HepG2 (cell line): ENCODE measurements at regions of chr17 and their contacts with region 1.

Region 1: DNA sequence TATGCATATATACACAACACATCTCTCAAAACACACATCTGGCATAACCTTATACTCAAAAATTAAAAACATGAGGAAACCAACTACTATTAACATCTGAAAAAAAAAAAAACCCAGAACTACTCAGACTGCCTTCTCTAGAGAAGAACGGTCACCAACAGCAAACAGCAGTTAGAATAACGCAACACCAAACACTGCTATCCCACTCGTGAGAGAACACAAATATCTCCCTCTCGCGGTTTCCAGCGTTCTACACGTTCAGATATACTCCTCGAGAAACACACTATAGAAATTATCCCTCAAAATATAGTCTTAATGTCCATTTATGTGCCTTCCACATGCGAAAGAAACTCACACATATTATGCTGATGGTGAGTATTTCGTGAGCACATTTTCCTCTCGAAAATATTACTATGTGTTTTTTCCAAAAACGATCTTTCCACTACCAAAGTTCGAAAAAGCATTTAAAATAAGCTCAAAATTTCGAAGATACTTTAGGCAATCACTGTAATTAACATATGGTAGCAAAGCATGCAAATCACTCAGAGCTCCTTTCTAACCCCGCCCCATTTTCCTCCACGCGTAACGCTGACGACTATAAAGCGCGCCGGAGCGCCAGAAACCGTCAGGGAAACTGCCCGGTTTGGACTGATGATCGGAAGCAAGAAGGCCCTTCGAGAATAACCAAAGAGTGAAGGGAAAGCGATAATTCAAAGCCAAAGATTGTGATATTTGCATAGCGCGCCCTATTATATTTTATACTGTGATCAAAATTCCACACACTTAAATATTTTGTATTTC is 60.1 kb downstream of the TEX14 start:
- DNase-seq: peak; percentile 99
- ATAC-seq: peak; percentile 98
- H3K4me3 ChIP-seq: peak overlapping the region; percentile 52 to 71 (median 71)
- H3K27ac ChIP-seq: peak overlapping the region; percentile 96
- H3K4me1 ChIP-seq: peaks cover 25% of the 10 kb centered on the region
- H3K27me3 ChIP-seq: no peaks in the 10 kb centered on the region
- CTCF ChIP-seq: peak; percentile 56
- EP300 ChIP-seq: peak; percentile 39 to 83; a peak in 3 of 4 replicates
- POLR2A ChIP-seq: peak; percentile 100
- RAD21 ChIP-seq: peak; percentile 82

Region 2: GRCh38 chr17:58427807-58428206 is 203.9 kb before region 1 on chr17:
- CTCF ChIA-PET with region 1: no interaction called
- POLR2A ChIA-PET with region 1: no interaction called
- in situ Hi-C with region 1: no loop called
- intact Hi-C with region 1: no loop called
- DNase-seq: no peak
- ATAC-seq: no peak
- H3K4me3 ChIP-seq: no peak overlapping the region
- H3K27ac ChIP-seq: no peak overlapping the region
- H3K4me1 ChIP-seq: 0 out of 2 replicates have a peak, but pooled peaks cover 5% of the 10 kb centered on the region
- H3K27me3 ChIP-seq: peaks cover 0 to 10% of the 10 kb centered on the region in 2 experiments; a peak in 2 of 5 replicates
- CTCF ChIP-seq: no peak
- EP300 ChIP-seq: no peak
- POLR2A ChIP-seq: no peak
- RAD21 ChIP-seq: no peak

Region 3: GRCh38 chr17:58577642-58578091 is 54.1 kb before region 1 on chr17:
- CTCF ChIA-PET with region 1: no interaction called
- POLR2A ChIA-PET with region 1: interaction called, 21 read pairs
- in situ Hi-C with region 1: no loop called
- intact Hi-C with region 1: no loop called
- DNase-seq: peak; percentile 52
- ATAC-seq: peak; percentile 35; the same call in 2 of the 3 replicates
- H3K4me3 ChIP-seq: no peak overlapping the region
- H3K27ac ChIP-seq: no peak overlapping the region
- H3K4me1 ChIP-seq: peaks cover 39% of the 10 kb centered on the region
- H3K27me3 ChIP-seq: no peaks in the 10 kb centered on the region
- CTCF ChIP-seq: peak; percentile 60
- EP300 ChIP-seq: 0 out of 4 replicates have a peak, but pooled peaks of 1 of the 2 experiments have one; percentile 21
- POLR2A ChIP-seq: no peak
- RAD21 ChIP-seq: no peak

Region 4: GRCh38 chr17:58615768-58616659 is 15.7 kb before region 1 on chr17:
- CTCF ChIA-PET with region 1: no interaction called
- POLR2A ChIA-PET with region 1: interaction called, 28 read pairs
- in situ Hi-C with region 1: no loop called
- intact Hi-C with region 1: no loop called
- DNase-seq: no peak
- ATAC-seq: no peak
- H3K4me3 ChIP-seq: no peak overlapping the region
- H3K27ac ChIP-seq: no peak overlapping the region
- H3K4me1 ChIP-seq: peaks cover 8% of the 10 kb centered on the region
- H3K27me3 ChIP-seq: peaks cover 3 to 30% of the 10 kb centered on the region in 2 experiments; a peak in 3 of 5 replicates
- CTCF ChIP-seq: no peak
- EP300 ChIP-seq: no peak
- POLR2A ChIP-seq: no peak
- RAD21 ChIP-seq: no peak

Region 5: GRCh38 chr17:58648236-58648806 is 16.6 kb after region 1 on chr17:
- CTCF ChIA-PET with region 1: no interaction called
- POLR2A ChIA-PET with region 1: interaction called, 16 read pairs
- in situ Hi-C with region 1: no loop called
- intact Hi-C with region 1: no loop called
- DNase-seq: no peak
- ATAC-seq: peak; percentile 31; the same call in 1 of the 3 replicates
- H3K4me3 ChIP-seq: no peak overlapping the region
- H3K27ac ChIP-seq: no peak overlapping the region
- H3K4me1 ChIP-seq: no peaks in the 10 kb centered on the region
- H3K27me3 ChIP-seq: peaks cover 0 to 3% of the 10 kb centered on the region in 2 experiments; a peak in 2 of 5 replicates
- CTCF ChIP-seq: no peak
- EP300 ChIP-seq: no peak
- POLR2A ChIP-seq: no peak
- RAD21 ChIP-seq: no peak

Region 6: GRCh38 chr17:58692239-58693055 is 60.7 kb after region 1 on chr17 and contains the start of gene RAD51C:
- CTCF ChIA-PET with region 1: no interaction called
- POLR2A ChIA-PET with region 1: interaction called, 49 read pairs
- in situ Hi-C with region 1: no loop called
- intact Hi-C with region 1: loop called (anchors 1 kb)
- DNase-seq: peak; percentile 84
- ATAC-seq: peak; percentile 99
- H3K4me3 ChIP-seq: peak within 1 kb of the TSS; percentile 63 to 85 (median 69)
- H3K27ac ChIP-seq: peak within 1 kb of the TSS; percentile 77
- H3K4me1 ChIP-seq: peaks cover 26% of the 10 kb centered on the region
- H3K27me3 ChIP-seq: peaks cover 0 to under 1% of the 10 kb centered on the region in 2 experiments; a peak in 1 of 5 replicates
- CTCF ChIP-seq: no peak; the same call in 1 of the 2 replicates
- EP300 ChIP-seq: no peak
- POLR2A ChIP-seq: peak; percentile 86 to 90; a peak in 3 of 4 replicates
- RAD21 ChIP-seq: peak; percentile 49
- total RNA-seq, gene RAD51C: 106 and 151 TPM in 2 replicates

Region 7: DNA sequence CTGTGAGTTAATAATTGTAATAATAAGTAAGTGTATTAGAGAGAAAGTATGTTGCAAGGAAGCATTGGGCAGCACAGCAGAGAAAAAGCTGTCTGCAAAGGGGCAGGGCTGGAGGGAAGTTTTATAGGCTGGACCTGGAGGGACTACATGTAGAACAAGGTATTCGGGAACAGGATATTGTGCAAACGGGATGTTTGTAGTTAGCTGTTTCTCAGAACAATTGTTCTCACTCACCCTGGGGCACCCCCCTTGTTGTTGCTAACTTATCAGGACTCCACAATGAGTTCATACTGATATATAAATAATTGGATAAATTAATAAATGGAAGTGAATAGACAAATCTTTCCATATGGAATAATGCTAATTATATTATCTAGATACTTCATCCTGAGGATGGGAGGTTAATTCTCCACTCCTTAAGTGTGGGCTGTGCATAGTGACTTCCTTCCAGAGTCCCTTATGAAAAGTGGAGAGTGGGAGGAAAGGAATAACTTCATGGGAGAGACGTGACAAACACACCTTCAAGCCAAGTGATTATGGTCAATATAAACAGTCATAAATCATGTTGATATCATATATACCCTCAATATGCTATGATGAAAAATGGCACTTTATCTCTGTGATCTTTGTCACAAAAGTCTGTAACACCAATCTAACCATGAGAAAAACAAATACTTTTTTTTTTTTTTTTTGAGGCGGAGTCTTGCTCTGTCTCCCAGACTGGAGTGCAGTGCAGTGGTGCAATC is 209.3 kb after region 1 on chr17:
- CTCF ChIA-PET with region 1: no interaction called
- POLR2A ChIA-PET with region 1: no interaction called
- in situ Hi-C with region 1: no loop called
- intact Hi-C with region 1: no loop called
- DNase-seq: peak; percentile 18
- ATAC-seq: no peak
- H3K4me3 ChIP-seq: no peak overlapping the region
- H3K27ac ChIP-seq: no peak overlapping the region
- H3K4me1 ChIP-seq: 0 out of 2 replicates have a peak, but pooled peaks cover 16% of the 10 kb centered on the region
- H3K27me3 ChIP-seq: no peaks in the 10 kb centered on the region; a peak in 1 of 5 replicates
- CTCF ChIP-seq: no peak
- EP300 ChIP-seq: no peak
- POLR2A ChIP-seq: no peak
- RAD21 ChIP-seq: no peak

Region 8: GRCh38 chr17:59155439-59156182 is 523.9 kb after region 1 on chr17 and contains the start of gene PRR11:
- CTCF ChIA-PET with region 1: no interaction called
- POLR2A ChIA-PET with region 1: interaction called, 18 read pairs
- in situ Hi-C with region 1: no loop called
- intact Hi-C with region 1: no loop called
- DNase-seq: peak; percentile 100
- ATAC-seq: peak; percentile 94
- H3K4me3 ChIP-seq: peak within 1 kb of the TSS; percentile 83 to 95 (median 89)
- H3K27ac ChIP-seq: peak within 1 kb of the TSS; percentile 95
- H3K4me1 ChIP-seq: peaks cover 60% of the 10 kb centered on the region
- H3K27me3 ChIP-seq: no peaks in the 10 kb centered on the region; a peak in 1 of 5 replicates
- CTCF ChIP-seq: no peak
- EP300 ChIP-seq: no peak
- POLR2A ChIP-seq: peak in 1 of 2 experiments; percentile 66; a peak in 2 of 4 replicates
- RAD21 ChIP-seq: no peak
- total RNA-seq, gene PRR11: 39.2 and 50.4 TPM in 2 replicates